ENCODE measurements at regions of chr9 and their contacts with region 1.

Region 1: GRCh38 chr9:99259231-99259918 is 37.3 kb downstream of the SEC61B start:
- DNase-seq: peak; percentile 54
- CTCF ChIP-seq: no peak

Region 2: GRCh38 chr9:98796364-98797101 is 462.8 kb before region 1 on chr9 and contains the start of gene ANKS6:
- in situ Hi-C with region 1: no loop called
- DNase-seq: peak; percentile 94
- CTCF ChIP-seq: peak; percentile 76

Region 3: DNA sequence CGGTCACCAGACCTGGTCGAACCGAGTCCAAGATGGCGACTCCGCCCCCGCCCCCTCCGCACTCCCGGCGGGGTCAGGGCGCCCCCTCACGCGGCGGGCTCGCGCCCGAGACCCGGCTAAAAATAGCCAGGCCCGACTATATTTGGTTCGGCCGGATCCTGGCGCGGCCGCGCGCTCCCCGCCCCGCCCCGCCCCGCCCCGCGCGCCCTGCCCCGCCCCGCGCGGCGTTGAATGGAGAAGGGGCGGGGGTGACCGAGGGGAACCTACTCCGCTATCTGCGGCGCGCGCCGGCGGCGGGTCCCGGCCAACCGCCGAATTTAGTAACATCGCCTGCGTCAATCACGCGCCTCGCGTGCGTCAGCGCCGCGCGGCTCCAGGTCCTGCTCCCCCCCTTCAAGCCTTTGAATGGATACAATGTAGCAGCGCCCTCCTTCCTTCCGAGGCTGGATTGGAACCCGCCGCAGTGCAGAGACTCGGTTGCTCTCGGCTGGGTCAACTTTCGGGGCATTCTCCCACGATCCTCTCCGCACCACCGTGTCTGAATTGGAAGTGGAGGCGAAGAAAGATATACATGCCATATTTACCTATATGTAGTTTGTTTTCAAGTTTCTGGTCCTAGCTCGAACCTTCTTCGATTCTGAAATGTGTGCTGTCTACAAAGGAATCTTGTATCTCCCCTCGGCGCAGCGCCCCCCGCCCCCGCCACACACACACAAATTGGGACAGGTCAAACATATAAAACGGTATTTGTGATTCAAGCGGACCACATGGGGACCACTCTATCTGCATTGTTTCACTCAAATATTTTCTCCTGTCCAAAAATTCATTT is 560.7 kb after region 1 on chr9:
- in situ Hi-C with region 1: loop called (anchors 10 kb)
- DNase-seq: peak; percentile 91
- CTCF ChIP-seq: no peak

Measured in GM13976 (cell line).